ENCODE measurements at regions of chr13 and their contacts with region 1.

Region 1: GRCh38 chr13:113863436-113864272 is at the start of gene GAS6:
- DNase-seq: peak; percentile 80
- H3K4me3 ChIP-seq: peak within 1 kb of the TSS; percentile 38 to 86 (median 70)
- H3K27ac ChIP-seq: peak within 1 kb of the TSS; percentile 77 to 95 (median 89)
- H3K4me1 ChIP-seq: peaks cover 20 to 52% (median 40%) of the 10 kb centered on the region in 4 donors
- H3K27me3 ChIP-seq: peaks cover 9% of the 10 kb centered on the region
- CTCF ChIP-seq: no peak
- EP300 ChIP-seq: no peak
- POLR2A ChIP-seq: no peak
- total RNA-seq, gene GAS6: 152 to 284 (median 169) TPM

Region 2: DNA sequence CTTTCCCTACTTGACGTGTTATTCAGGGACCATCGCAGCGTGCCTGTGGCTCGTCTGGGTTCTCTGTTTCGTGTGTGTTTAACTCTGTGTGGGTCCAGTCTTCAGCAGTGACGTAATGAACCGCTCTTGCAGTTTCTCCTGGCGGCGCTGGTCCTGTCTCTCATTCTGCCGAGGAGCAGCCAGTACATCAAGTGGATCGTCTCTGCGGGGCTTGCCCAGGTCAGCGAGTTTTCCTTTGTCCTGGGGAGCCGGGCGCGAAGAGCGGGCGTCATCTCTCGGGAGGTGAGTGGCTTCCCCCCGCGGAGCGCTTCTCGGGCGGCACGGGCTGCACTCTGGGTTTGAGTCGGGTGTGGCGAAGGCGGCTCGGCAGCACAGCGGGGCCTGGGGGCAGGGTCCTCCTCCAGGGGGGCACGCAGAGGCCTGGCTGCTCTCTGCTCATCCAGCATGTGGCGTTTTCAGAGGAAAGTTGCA is 315.4 kb before region 1 on chr13:
- in situ Hi-C with region 1: no loop called
- intact Hi-C with region 1: no loop called
- DNase-seq: peak; percentile 6
- H3K4me3 ChIP-seq: no peak overlapping the region
- H3K27ac ChIP-seq: peak overlapping the region in 1 of 4 donors; percentile 24
- H3K4me1 ChIP-seq: peaks cover 0 to 13% (median 2%) of the 10 kb centered on the region in 4 donors
- H3K27me3 ChIP-seq: no peaks in the 10 kb centered on the region
- CTCF ChIP-seq: no peak
- EP300 ChIP-seq: no peak
- POLR2A ChIP-seq: no peak

Region 3: DNA sequence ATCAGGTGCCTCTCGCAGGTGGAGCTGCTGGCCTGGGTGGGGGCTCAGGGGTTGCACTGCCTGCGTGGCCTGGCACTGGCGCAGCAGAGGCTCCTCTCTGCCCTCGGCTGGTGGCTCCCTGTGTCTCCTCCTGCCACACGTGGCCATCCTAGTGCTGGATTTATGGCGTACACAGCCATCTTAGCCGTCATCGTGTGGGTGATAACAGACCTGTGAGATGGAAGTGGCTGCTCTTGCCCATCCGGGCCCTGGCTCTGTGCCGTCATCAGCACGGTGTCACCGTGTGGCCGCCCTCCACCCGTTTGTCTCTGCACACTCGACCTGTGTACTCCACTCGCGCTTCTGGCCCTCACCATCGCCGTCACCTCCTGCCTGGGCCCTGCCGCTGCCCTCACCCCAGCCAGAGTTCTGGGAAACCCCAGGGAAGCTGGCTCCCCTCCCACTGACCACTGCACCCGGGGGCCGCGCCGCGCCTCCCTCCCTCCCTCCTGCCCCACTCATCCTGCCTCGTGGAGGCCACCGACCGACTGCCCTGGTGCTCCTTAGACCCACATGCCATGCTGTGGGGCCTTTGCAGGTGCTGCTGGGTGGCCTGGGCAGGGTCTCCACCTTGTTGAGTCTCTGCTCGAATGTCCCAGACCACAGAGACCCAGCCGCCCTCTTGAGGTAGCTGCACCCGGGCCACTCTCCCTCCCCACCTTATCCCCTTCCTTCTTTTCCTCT is 75.1 kb before region 1 on chr13:
- in situ Hi-C with region 1: no loop called
- intact Hi-C with region 1: loop called (anchors 2 kb)
- DNase-seq: no peak
- H3K4me3 ChIP-seq: no peak overlapping the region
- H3K27ac ChIP-seq: no peak overlapping the region
- H3K4me1 ChIP-seq: peaks cover 0 to 6% (median 0%) of the 10 kb centered on the region in 4 donors
- H3K27me3 ChIP-seq: peaks cover 4% of the 10 kb centered on the region
- CTCF ChIP-seq: no peak
- EP300 ChIP-seq: no peak
- POLR2A ChIP-seq: no peak